SK-N-SH (cell line): ENCODE measurements at regions of chr7 and their contacts with region 1.

Region 1: GRCh38 chr7:25851332-25852210 is 300.4 kb upstream of the NFE2L3 start:
- DNase-seq: peak; percentile 81
- H3K4me3 ChIP-seq: peak overlapping the region; percentile 21 to 38; a peak in 2 of 4 replicates
- H3K27ac ChIP-seq: no peak overlapping the region
- H3K4me1 ChIP-seq: peaks cover 0 to 24% of the 10 kb centered on the region in 2 experiments; a peak in 2 of 4 replicates
- H3K27me3 ChIP-seq: peaks cover 49% of the 10 kb centered on the region
- CTCF ChIP-seq: peak; percentile 92
- EP300 ChIP-seq: no peak
- RAD21 ChIP-seq: peak; percentile 99

Region 2: DNA sequence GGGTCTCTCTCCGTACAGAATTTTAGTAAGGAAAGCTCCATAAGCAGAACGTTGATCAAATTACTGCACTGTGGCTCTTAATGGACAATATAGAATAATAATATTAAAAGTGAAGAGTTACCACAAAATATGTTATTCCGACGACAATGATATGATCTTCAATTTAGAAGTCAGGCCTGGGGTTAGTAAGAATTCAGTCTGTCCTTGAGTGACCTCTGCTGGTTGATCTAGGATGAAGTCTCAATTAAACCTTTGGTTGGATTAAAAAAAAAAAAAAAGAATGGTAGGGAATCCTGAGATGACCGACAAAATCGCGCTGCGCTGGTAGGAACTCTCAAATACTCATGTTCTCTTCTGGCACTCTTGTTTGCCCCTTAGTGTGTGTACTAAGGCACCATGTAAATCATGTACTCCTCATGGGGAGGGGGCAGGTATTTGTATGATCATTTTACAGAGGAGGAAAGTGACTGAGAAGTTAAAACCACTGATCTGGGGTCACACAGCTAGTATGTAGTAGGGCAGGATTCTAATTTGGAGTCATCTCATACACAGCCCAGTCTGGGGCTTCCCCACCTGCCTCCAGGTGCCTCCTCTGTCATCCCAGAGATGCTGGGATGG is 462.0 kb before region 1 on chr7:
- CTCF ChIA-PET with region 1: interaction called, 401 read pairs
- POLR2A ChIA-PET with region 1: interaction called, 3 read pairs
- DNase-seq: peak; percentile 68
- H3K4me3 ChIP-seq: no peak overlapping the region
- H3K27ac ChIP-seq: no peak overlapping the region
- H3K4me1 ChIP-seq: peaks cover 0 to 20% of the 10 kb centered on the region in 2 experiments; a peak in 2 of 4 replicates
- H3K27me3 ChIP-seq: no peaks in the 10 kb centered on the region
- CTCF ChIP-seq: peak; percentile 73
- EP300 ChIP-seq: no peak
- RAD21 ChIP-seq: peak; percentile 88

Region 3: DNA sequence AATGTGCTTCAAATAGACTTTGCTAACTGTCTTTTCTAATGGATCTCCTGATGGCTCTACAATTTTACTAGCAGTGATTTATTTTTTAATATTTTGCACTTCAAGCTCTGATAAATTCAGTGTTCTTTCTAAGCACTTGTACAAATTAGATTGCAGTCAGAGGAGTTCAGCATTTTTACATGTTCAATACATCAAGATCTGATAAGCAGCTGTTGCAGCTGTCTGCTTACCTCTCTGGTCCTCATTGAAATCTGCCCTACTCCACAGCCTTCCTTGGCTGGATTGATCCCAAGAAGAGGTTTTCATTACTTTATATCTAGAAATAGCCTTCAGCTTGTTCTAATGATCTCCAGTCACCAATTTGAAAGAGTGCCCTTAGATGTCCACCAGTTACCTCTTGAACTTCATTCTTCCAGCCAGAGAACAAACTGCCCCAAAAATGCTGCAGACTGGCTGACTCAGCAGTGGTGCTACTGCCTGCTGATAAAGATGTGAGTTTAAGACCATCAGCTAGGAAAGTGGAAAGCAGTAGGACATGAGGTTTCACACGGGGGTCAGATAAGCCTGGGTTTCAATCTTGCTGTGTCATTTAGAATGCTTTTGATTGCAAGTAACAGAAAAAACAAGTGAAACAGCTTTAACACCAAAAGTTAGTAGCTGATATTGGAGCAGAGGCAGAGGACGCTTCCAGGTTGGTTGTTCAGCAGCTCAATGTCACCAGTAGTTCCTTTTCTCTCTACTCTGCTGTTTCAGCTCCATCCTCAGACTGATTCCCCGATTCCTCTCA is 272.4 kb before region 1 on chr7:
- CTCF ChIA-PET with region 1: interaction called, 432 read pairs
- POLR2A ChIA-PET with region 1: no interaction called
- DNase-seq: no peak
- H3K4me3 ChIP-seq: no peak overlapping the region
- H3K27ac ChIP-seq: no peak overlapping the region
- H3K4me1 ChIP-seq: peaks cover 0 to 8% of the 10 kb centered on the region in 2 experiments; a peak in 2 of 4 replicates
- H3K27me3 ChIP-seq: no peaks in the 10 kb centered on the region
- CTCF ChIP-seq: no peak
- EP300 ChIP-seq: no peak
- RAD21 ChIP-seq: no peak

Region 4: DNA sequence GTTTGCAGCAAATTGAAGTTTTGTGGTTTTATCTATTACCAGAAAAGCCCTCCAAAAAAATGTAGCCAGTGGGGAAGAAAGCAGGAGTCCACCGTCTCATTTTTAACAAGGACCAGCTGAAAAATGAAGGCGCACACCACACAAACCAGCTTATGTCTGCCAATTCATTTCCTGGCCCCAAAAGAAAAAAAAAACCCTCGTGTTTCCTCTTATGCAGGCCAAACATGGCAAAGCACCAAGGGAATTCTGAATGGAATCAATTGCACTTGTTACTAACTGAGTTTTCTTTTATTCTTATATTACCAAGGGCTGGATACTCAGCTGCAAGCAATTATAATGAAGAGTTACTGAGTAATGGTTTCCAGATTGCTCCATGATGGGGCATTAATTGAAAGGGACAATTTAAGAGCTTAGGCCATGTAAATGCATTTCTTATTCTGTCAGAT is 195.0 kb before region 1 on chr7:
- CTCF ChIA-PET with region 1: interaction called, 31 read pairs
- POLR2A ChIA-PET with region 1: no interaction called
- DNase-seq: peak; percentile 34
- H3K4me3 ChIP-seq: no peak overlapping the region
- H3K27ac ChIP-seq: peak overlapping the region in 1 of 2 experiments; percentile 94; a peak in 2 of 4 replicates
- H3K4me1 ChIP-seq: peaks cover 0 to 59% of the 10 kb centered on the region in 2 experiments; a peak in 3 of 4 replicates
- H3K27me3 ChIP-seq: no peaks in the 10 kb centered on the region
- CTCF ChIP-seq: no peak
- EP300 ChIP-seq: peak in 1 of 2 experiments; percentile 92; a peak in 3 of 4 replicates
- RAD21 ChIP-seq: peak; percentile 14; the same call in 1 of the 2 replicates

Region 5: DNA sequence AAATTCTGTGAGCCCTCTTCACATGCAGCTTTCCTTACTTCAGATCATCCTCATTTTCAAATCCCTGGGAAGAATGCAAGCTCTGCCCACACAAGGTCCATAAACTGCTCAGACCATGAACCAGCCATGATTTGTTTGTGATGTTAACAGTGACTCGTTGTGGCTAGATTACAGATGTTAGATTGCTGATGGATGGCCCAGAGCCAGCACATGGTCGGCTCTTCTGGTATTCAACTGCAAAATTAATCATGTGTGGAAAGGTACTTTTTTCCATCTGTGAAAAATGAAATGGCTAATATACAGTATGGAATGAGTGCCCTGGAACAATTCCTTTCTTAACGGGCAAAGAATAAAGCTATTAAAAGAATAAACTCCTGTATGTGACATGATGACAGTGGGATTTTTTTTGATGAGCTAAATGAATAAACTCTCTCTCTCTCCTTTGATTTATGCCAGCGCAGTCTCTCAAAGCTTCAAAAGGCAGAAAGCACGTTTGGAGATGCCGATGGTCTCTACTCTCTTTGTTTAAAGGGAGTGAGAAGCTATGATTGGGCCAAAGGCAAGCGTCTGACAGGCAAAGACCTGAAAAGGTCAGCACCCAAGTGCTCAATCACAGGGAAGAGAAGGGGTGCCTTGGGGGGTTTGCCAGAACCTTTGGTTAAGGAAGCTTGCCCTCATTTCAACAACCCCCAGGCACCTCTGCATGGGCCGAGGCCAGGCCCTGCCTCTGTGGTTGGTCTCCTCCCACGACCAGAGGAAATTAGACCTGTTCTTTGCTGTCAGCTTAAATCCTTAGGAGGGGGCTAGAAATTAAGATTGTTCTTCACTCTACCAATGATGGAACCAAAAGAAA is 143.6 kb before region 1 on chr7:
- CTCF ChIA-PET with region 1: interaction called, 16 read pairs
- POLR2A ChIA-PET with region 1: no interaction called
- DNase-seq: peak; percentile 53
- H3K4me3 ChIP-seq: no peak overlapping the region
- H3K27ac ChIP-seq: no peak overlapping the region
- H3K4me1 ChIP-seq: peaks cover 0 to 5% of the 10 kb centered on the region in 2 experiments; a peak in 1 of 4 replicates
- H3K27me3 ChIP-seq: no peaks in the 10 kb centered on the region
- CTCF ChIP-seq: no peak
- EP300 ChIP-seq: no peak
- RAD21 ChIP-seq: peak; percentile 11; the same call in 1 of the 2 replicates

Region 6: GRCh38 chr7:25862260-25863037 is 10.9 kb after region 1 on chr7:
- CTCF ChIA-PET with region 1: interaction called, 13 read pairs
- POLR2A ChIA-PET with region 1: no interaction called
- DNase-seq: peak; percentile 95
- H3K4me3 ChIP-seq: peak overlapping the region; percentile 37 to 48
- H3K27ac ChIP-seq: no peak overlapping the region
- H3K4me1 ChIP-seq: peaks cover 0 to 9% of the 10 kb centered on the region in 2 experiments; a peak in 2 of 4 replicates
- H3K27me3 ChIP-seq: peaks cover 59% of the 10 kb centered on the region
- CTCF ChIP-seq: no peak
- EP300 ChIP-seq: no peak
- RAD21 ChIP-seq: no peak

Region 7: DNA sequence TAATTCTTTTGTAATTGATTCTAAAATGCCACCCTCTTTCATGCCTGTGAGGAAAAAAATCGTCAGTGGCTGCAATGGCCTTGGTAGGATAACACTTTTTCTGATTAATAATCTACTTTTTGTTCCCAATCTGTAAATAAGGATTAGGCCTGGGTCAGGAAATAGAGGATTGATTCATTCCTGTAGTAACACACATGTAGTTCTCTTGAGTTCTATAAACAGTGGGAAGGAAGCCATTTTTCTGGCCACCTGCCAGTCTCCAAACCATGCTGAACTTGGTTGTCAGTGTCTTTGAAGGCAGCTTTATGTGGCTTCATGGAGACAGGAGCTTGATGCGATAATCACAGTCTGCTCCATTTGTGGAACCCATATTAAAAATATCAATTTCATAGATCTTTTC is 131.1 kb after region 1 on chr7:
- CTCF ChIA-PET with region 1: no interaction called
- POLR2A ChIA-PET with region 1: no interaction called
- DNase-seq: no peak
- H3K4me3 ChIP-seq: no peak overlapping the region
- H3K27ac ChIP-seq: no peak overlapping the region
- H3K4me1 ChIP-seq: no peaks in the 10 kb centered on the region
- H3K27me3 ChIP-seq: no peaks in the 10 kb centered on the region
- CTCF ChIP-seq: no peak
- EP300 ChIP-seq: no peak
- RAD21 ChIP-seq: no peak